Right cardiac atrium (tissue), 5 donors: ENCODE measurements at regions of chr7 and their contacts with region 1.

Region 1: DNA sequence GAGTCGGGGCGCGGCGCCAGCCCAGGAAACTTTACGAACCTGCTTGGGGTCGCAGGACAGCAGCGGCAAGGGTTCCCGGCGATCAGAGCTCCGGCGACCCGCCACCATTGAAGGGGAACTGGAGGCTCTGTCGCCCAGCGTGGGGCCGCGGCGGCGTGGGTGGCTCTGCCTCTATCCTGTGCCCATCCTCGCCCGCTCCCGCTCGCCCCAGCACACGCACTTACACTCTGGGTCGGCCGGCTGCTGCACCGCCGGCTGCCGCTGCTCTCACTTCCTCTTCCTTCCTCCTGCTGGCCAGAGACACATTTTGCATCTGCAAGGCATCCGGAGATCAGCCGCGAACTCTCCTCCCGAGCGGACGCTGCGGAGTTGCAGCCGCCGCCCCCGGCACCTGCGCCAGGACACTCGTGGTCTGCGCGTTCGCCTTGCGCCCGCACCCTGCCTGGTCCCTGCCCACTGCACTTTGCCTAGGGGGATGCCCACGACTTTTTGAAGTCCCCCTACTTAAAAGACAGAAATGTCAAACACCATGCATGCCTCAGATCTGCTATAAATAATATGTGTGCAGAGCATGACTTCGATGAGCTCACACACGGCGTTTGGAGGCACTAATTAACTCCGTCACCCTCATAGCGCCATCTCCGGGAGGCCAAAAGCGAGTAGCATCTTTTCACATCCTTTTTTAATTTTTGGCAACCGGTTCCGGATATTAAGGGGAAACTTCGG is at the start of gene ELMO1:
- DNase-seq: peak; percentile 83 to 92 (median 90)
- ATAC-seq: peak; percentile 89
- H3K4me3 ChIP-seq: peak within 1 kb of the TSS; percentile 76
- H3K27ac ChIP-seq: peak within 1 kb of the TSS; percentile 77
- H3K4me1 ChIP-seq: peaks cover 2% of the 10 kb centered on the region
- H3K27me3 ChIP-seq: no peaks in the 10 kb centered on the region
- total RNA-seq, gene ELMO1: 17.9 to 20.8 (median 18.9) TPM

Region 2: GRCh38 chr7:37201003-37201875 is 247.6 kb before region 1 on chr7:
- intact Hi-C with region 1: no loop called
- DNase-seq: peak; percentile 75 to 90 (median 85)
- ATAC-seq: peak; percentile 85 to 89
- H3K4me3 ChIP-seq: no peak overlapping the region
- H3K27ac ChIP-seq: peak overlapping the region; percentile 94
- H3K4me1 ChIP-seq: peaks cover 4% of the 10 kb centered on the region
- H3K27me3 ChIP-seq: no peaks in the 10 kb centered on the region

Region 3: DNA sequence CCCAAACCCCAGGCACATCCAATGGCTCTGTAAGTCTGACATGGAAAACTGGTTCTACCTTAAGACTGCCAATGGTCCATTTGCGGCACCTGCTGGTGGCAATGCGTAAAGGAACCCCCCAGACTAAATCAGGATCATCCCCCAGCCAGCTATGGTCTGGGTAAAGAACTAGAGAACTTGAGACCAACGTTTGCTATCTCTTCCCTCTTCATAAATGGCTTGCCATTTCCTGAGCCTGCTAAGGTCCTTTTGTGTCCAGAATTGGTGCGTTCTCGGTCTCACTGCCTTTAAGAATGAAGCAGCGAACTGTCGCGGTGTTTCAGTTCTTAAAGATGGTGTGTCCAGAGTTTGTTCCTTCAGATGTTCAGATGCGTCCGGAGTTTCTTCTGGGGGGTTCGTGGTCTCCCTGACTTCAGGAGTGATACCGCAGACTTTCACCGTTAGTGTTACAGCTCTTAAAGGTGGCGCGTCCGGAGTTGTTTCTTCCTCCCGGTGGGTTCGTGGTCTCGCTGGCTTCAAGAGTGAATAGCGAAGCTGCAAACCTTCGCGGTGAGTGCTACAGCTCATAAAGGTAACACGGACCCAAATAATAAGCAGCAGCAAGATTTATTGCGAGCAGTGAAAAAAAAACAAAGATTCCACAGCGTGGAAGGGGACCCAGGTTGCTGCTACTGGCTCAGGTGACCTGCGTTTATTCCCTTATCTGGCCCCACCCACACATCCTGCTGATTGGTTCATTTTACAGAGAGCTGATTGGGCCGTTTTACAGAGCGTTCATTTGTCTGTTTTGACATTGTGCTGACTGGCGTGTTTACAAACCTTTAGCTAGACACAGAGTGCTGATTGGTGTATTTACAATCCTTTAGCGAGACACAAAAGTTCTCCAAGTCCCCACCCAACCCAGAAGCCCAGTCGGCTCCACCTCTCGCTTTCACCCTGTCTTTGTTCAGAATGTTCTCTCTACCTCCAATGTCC is 95.5 kb before region 1 on chr7:
- intact Hi-C with region 1: loop called in 1 of 4 experiments (anchors 10 kb)
- DNase-seq: peak in 2 of 3 donors; percentile 27 to 49
- ATAC-seq: peak; percentile 8 to 16
- H3K4me3 ChIP-seq: no peak overlapping the region
- H3K27ac ChIP-seq: peak overlapping the region; percentile 80
- H3K4me1 ChIP-seq: peaks cover 11% of the 10 kb centered on the region
- H3K27me3 ChIP-seq: no peaks in the 10 kb centered on the region

Region 4: GRCh38 chr7:37410305-37411229 is 38.2 kb before region 1 on chr7:
- intact Hi-C with region 1: loop called in 1 of 4 experiments (anchors 5 kb)
- DNase-seq: no peak
- ATAC-seq: no peak
- H3K4me3 ChIP-seq: no peak overlapping the region
- H3K27ac ChIP-seq: no peak overlapping the region
- H3K4me1 ChIP-seq: peaks cover 7% of the 10 kb centered on the region
- H3K27me3 ChIP-seq: no peaks in the 10 kb centered on the region

Region 5: DNA sequence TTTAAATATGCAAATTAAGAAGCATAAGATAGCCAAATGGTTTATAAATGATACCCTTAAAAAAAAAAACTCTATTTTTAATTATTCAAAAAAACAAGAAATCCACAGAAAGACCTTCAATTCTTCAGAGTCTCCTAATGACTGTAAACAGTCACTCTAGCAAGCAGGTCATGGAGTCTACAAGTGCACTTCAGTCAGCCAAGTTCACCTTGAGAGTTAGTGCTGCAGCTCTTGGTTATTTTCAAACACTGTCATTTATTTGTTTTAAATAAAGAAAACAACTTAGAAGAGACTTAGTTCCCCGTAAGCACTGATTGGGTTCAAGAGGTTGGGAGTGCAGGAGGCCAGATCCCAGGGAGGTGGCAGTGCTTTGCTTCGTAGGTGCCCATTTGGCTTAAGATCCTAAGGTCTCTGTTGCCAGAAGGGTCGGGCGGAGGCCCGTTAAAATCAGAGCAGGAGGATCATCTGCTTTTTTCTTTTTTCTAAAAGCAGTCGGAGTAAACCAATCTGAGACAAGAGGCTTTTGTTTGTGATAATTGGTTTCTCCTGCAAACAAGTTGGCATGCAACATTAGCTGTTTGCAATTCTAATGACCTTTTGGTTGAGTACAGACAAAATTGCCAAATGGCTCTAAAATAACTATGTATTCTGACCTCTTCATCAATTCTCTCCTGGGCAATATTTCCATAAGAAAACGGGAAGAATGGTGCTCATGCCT is 86.3 kb after region 1 on chr7:
- intact Hi-C with region 1: no loop called
- DNase-seq: no peak
- ATAC-seq: no peak
- H3K4me3 ChIP-seq: no peak overlapping the region
- H3K27ac ChIP-seq: no peak overlapping the region
- H3K4me1 ChIP-seq: peaks cover 2% of the 10 kb centered on the region
- H3K27me3 ChIP-seq: no peaks in the 10 kb centered on the region

Region 6: DNA sequence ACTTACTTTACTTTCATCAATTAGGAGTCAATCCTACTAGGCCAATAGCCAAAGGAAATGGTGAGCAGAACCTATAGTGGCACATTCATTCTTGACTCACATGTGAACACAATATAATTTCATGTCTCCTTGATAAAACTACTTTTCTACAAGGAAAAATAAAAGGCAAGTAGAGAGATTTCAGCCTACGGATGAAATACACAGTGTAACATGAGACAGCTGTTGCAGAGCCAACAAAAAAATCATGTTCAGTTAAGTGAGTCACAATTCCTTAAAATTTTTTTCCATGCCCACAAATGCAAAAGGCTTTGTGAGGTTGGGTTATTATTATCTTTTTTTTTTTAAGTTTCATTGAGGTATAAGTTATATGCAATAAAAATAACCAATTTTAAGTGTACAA is 289.5 kb after region 1 on chr7:
- intact Hi-C with region 1: no loop called
- DNase-seq: no peak
- ATAC-seq: no peak
- H3K4me3 ChIP-seq: no peak overlapping the region
- H3K27ac ChIP-seq: no peak overlapping the region
- H3K4me1 ChIP-seq: no peaks in the 10 kb centered on the region
- H3K27me3 ChIP-seq: no peaks in the 10 kb centered on the region